Activated T-helper 1 cell treated with anti-CD3 and anti-CD28 coated beads, Interleukin-12 subunit alpha, Interleukin-12 subunit beta, Interleukin-2, Interleukin-4 antibody, amounts not matched to agents 30 ng/mL and 10 ng/mL and 1 ng/mL, durations not matched to agents 14 hours and 24 hours and 36 hours (primary cell): ENCODE measurements at regions of chr3 and their contacts with region 1.

Region 1: DNA sequence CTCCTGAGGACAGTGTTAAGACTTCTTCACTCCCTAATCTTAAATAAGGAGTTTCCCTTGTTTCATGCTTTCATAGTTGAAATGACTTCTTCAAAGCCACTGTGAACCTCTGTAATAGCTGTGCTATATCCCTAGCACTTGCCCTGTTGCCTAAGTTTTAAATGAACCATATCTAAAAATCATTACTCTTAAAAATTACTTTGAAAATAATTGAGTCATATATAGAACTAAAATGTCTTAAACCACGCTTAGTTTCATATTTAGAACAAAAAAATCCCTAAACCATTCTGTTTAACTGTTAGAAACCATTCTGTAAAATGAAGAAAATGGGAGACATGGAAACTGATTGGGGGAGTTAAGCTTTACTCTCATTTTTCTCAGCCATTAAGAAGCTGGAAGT is 29.8 kb downstream of the DNAJC19 start:
- DNase-seq: no peak
- H3K4me3 Mint-ChIP-seq: no peak overlapping the region
- H3K27ac Mint-ChIP-seq: peak overlapping the region; percentile 15
- H3K4me1 Mint-ChIP-seq: peaks cover 14% of the 10 kb centered on the region
- H3K27me3 Mint-ChIP-seq: no peaks in the 10 kb centered on the region

Region 2: GRCh38 chr3:180973543-180973942 is 13.9 kb after region 1 on chr3:
- intact Hi-C with region 1: loop called (anchors 2 kb)
- DNase-seq: no peak
- H3K4me3 Mint-ChIP-seq: no peak overlapping the region
- H3K27ac Mint-ChIP-seq: no peak overlapping the region
- H3K4me1 Mint-ChIP-seq: peaks cover 9% of the 10 kb centered on the region
- H3K27me3 Mint-ChIP-seq: no peaks in the 10 kb centered on the region

Region 3: DNA sequence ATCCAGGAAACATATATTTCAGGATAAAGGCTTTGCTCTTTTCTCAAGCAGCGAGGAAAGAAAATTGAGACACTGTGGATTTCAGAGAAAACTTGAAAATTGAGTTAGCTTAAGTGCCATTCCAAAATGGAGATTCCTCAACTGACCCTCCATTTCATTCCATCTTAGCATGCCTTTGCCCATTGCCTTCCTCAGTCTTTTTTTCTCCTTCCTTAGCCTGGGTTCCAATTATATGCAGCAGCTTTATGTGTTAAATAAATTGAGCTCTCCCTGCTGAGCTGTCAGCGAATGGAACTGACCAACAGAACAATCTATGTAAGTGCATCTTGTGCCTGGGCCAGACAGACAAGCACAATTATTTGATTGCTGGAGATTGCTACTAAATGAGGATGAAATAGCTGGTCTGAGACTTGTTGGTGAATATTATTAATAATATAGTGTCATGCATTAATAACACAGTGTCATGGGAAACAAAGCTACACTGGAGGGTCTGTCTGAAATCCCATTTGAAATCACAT is 36.8 kb after region 1 on chr3:
- intact Hi-C with region 1: no loop called
- DNase-seq: no peak
- H3K4me3 Mint-ChIP-seq: no peak overlapping the region
- H3K27ac Mint-ChIP-seq: no peak overlapping the region
- H3K4me1 Mint-ChIP-seq: no peaks in the 10 kb centered on the region
- H3K27me3 Mint-ChIP-seq: peaks cover 4% of the 10 kb centered on the region

Region 4: GRCh38 chr3:181025204-181025603 is 65.5 kb after region 1 on chr3:
- intact Hi-C with region 1: no loop called
- DNase-seq: no peak
- H3K4me3 Mint-ChIP-seq: no peak overlapping the region
- H3K27ac Mint-ChIP-seq: no peak overlapping the region
- H3K4me1 Mint-ChIP-seq: no peaks in the 10 kb centered on the region
- H3K27me3 Mint-ChIP-seq: no peaks in the 10 kb centered on the region